ENCODE measurements at regions of chr9 and their contacts with region 1.

Region 1: DNA sequence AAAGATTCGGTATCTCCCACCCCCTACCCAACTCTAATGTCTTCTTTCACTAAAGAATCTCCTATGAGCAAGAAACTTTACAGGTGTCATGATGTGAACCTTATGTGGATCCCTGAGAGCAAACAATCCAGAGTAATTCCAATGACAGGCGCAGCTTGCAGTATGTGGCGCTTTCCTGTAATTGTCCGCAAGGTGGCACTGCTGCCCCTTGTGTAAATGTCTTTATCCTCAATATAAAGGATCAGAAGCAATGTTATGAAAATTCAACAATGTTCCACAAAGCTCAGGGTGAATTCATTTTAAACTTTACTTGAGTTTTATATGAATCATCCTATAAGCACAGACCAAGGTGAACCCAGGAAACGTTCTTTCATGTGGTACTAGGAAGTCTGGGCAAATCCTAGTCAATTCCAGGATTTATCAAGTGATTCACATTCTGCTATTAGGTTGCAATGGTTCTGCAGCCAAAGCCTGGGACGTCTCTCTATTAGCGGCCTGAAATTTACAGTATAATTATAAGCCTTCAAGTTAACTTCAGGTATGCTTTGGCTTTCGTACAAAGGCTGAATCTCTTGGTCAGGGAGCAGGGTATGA is 113.7 kb downstream of the TRPM6 start:
- DNase-seq: peak; percentile 73
- H3K27ac ChIP-seq: no peak overlapping the region
- CTCF ChIP-seq: peak; percentile 90

Region 2: GRCh38 chr9:74255489-74255984 is 518.4 kb before region 1 on chr9:
- CTCF ChIA-PET with region 1: no interaction called
- POLR2A ChIA-PET with region 1: no interaction called
- DNase-seq: no peak
- H3K27ac ChIP-seq: no peak overlapping the region
- CTCF ChIP-seq: no peak

Region 3: DNA sequence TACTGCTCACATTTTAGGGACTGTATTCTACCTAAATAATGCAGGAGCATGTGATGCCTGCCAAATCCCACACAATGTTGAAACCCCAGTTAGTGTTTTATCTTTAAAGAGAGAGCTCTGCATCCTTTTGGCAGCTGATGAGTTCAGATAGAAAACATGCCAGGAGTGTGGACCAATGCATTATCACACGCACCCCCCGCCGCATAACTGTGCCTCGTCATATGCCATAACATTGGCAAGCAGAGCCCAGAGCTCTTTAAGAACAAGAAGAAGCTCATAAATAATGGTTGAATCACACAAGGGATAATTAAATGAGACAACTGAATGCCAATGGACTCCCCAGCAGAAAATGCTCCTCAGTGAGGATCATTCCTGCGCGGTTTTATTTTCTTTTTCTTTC is 329.6 kb before region 1 on chr9:
- CTCF ChIA-PET with region 1: no interaction called
- POLR2A ChIA-PET with region 1: no interaction called
- DNase-seq: peak; percentile 15
- H3K27ac ChIP-seq: no peak overlapping the region
- CTCF ChIP-seq: no peak

Region 4: GRCh38 chr9:74478606-74479005 is 295.4 kb before region 1 on chr9:
- CTCF ChIA-PET with region 1: no interaction called
- POLR2A ChIA-PET with region 1: no interaction called
- DNase-seq: no peak
- H3K27ac ChIP-seq: no peak overlapping the region
- CTCF ChIP-seq: no peak

Region 5: GRCh38 chr9:74952281-74953151 is 178.5 kb after region 1 on chr9 and contains the start of gene C9orf40:
- CTCF ChIA-PET with region 1: interaction called, 20 read pairs
- POLR2A ChIA-PET with region 1: no interaction called
- DNase-seq: peak; percentile 78
- H3K27ac ChIP-seq: peak within 1 kb of the TSS; percentile 92
- CTCF ChIP-seq: peak; percentile 87

Region 6: GRCh38 chr9:75001719-75002422 is 227.9 kb after region 1 on chr9:
- CTCF ChIA-PET with region 1: interaction called, 21 read pairs
- POLR2A ChIA-PET with region 1: no interaction called
- DNase-seq: peak; percentile 40
- H3K27ac ChIP-seq: no peak overlapping the region
- CTCF ChIP-seq: peak; percentile 66

Region 7: DNA sequence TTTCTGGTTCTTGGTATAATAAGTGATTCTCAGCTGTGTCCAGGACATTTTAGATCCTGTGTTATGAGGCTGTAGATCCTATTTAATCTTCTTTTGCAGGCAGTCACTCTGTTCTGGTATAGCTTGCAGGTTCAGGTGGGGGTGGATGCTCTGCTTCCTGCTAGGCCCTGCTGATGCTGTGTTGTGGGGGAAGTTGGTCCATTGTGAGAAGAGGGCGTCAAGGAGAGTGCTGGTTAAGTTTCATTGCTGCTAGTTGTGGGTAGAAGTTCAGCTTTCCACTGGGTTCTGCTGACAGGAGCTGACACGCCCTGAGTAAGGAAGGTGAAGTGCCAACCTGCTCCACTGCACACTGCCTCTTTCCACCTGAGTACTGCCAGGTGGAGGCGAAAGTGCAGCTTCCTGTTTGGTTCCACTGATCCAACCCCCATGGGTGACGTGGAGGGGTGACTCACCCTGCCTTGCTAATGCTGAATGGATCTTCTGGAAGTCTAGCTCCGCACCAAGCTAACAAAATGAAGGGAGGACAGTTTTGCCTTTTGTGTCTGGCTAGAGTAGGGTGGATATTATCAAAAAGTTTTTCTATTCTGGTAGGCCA is 297.6 kb after region 1 on chr9:
- CTCF ChIA-PET with region 1: interaction called, 30 read pairs
- POLR2A ChIA-PET with region 1: no interaction called
- DNase-seq: peak; percentile 85
- H3K27ac ChIP-seq: no peak overlapping the region
- CTCF ChIP-seq: no peak

Region 8: DNA sequence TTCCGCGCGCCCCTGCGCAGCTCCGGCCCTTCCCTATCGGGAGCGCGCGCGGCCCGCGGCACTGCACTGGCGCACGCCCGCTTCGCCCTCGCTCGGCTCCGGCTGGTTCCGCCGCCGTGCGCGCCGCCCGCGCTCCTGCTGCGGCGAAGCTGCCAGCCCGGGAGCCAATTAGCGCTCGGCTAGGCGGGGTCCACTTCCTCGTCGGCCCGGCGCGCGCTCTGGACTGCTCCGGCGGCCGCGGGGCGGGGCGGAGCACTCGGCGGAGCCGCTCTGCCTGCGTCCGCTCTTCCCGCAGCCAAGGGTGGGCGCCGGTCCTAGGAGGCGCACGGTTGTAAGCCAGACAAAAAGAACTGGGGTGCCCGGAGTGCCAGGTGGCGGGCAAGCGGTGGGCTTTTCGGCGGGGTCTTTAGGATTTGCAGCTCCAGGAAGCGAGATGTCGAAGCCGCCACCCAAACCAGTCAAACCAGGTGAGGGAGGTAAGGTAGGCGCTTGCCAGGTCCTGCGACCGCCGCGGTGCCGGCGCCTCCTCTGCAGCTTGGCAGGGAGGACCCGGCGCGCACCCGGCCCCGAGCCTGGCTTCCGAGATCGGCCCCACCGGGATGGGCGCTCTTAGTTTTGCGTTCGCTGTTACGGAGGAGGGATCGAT is 314.4 kb after region 1 on chr9 and contains the start of gene OSTF1:
- CTCF ChIA-PET with region 1: interaction called, 10 read pairs
- POLR2A ChIA-PET with region 1: no interaction called
- DNase-seq: peak; percentile 91
- H3K27ac ChIP-seq: peak within 1 kb of the TSS; percentile 95
- CTCF ChIP-seq: no peak

Measured in RWPE1 (cell line).